ENCODE measurements at regions of chrX and their contacts with region 1.

Region 1: GRCh38 chrX:19855700-19856381 is 31.6 kb downstream of the SH3KBP1 start:
- DNase-seq: no peak
- ATAC-seq: peak; percentile 14
- H3K4me3 Mint-ChIP-seq: peak overlapping the region; percentile 53
- H3K27ac Mint-ChIP-seq: peak overlapping the region; percentile 92
- H3K4me1 Mint-ChIP-seq: peaks cover 35% of the 10 kb centered on the region
- H3K27me3 Mint-ChIP-seq: no peaks in the 10 kb centered on the region

Region 2: GRCh38 chrX:19840899-19841648 is 14.8 kb before region 1 on chrX:
- CTCF ChIA-PET with region 1: interaction called, 12 read pairs
- POLR2A ChIA-PET with region 1: no interaction called
- DNase-seq: no peak
- ATAC-seq: peak; percentile 67
- H3K4me3 Mint-ChIP-seq: peak overlapping the region; percentile 55
- H3K27ac Mint-ChIP-seq: peak overlapping the region; percentile 87
- H3K4me1 Mint-ChIP-seq: peaks cover 71% of the 10 kb centered on the region
- H3K27me3 Mint-ChIP-seq: no peaks in the 10 kb centered on the region

Region 3: DNA sequence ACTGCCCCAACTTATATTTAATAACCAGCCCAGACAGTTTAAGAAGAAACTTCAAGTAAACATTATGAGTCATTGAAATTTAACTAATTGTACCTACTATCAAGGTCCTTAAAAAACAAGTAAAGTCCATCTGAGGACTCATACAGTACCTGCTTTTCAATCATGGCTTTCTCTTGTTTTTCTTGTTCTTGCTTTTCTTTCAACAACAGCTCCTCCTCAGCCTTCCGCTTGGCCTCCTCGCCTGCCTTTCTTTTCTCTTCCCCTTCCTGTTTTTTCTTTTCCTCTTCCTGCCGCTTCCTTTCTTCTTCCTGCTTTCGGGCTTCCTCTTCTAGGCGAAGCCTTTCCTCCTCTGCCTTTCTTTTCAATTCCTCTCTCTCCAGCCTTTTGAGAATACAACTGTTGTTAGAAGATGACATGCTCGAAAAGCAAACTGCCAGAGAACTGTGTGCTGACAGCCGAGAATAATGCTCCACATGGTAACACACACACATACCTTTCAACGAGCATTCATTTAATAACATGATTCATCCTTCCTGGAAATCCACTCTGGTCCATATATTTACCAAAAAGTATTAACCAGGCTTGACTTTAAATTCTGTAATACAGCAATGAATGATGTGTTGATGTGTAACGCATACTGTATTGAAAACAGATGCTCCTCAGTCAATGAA is 160.2 kb after region 1 on chrX:
- CTCF ChIA-PET with region 1: no interaction called
- POLR2A ChIA-PET with region 1: no interaction called
- DNase-seq: no peak
- ATAC-seq: no peak
- H3K4me3 Mint-ChIP-seq: no peak overlapping the region
- H3K27ac Mint-ChIP-seq: no peak overlapping the region
- H3K4me1 Mint-ChIP-seq: peaks cover 2% of the 10 kb centered on the region
- H3K27me3 Mint-ChIP-seq: no peaks in the 10 kb centered on the region